ENCODE measurements at regions of chr15 and their contacts with region 1.

Region 1: DNA sequence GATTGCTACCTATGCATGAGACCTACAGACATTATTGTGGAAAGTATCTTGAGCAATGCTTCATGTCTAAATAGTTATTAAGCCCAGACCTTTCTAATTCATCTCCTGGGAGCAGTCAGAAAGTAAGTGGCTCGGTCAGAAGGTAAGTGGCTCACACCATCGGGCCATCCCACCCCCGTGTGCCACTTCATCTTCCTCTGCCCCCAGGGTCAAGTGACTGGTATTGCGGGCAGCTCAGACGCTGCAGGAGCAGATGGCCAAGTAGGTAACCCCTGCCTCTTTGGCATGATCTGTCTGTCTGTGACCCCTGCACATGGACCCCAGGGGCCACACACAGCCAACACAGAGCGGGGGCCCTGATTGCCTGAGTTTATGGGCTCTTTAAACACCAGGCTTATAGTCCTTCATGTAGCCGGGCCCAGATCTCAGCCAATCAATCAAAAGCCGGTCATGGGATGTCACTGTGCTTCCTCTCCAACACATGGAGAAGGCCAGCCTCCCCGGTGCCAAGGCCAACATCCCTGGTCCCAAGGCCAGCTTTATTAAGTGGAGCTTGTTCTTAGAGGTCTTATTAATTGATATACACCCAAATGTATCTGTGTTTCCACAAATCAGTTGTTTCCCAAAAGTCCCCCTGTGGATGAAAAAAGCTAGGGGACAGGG is 42.9 kb downstream of the LARP6 start:
- DNase-seq: no peak
- ATAC-seq: no peak
- H3K4me3 ChIP-seq: no peak overlapping the region
- H3K27ac ChIP-seq: no peak overlapping the region
- H3K4me1 ChIP-seq: peaks cover 42% of the 10 kb centered on the region
- H3K27me3 ChIP-seq: no peaks in the 10 kb centered on the region
- CTCF ChIP-seq: no peak

Region 2: GRCh38 chr15:70690491-70691257 is 120.4 kb before region 1 on chr15:
- CTCF ChIA-PET with region 1: interaction called, 3 read pairs
- POLR2A ChIA-PET with region 1: no interaction called
- intact Hi-C with region 1: loop called (anchors 5 kb)
- DNase-seq: peak; percentile 45
- ATAC-seq: peak; percentile 60
- H3K4me3 ChIP-seq: no peak overlapping the region
- H3K27ac ChIP-seq: no peak overlapping the region
- H3K4me1 ChIP-seq: peaks cover 40% of the 10 kb centered on the region
- H3K27me3 ChIP-seq: no peaks in the 10 kb centered on the region
- CTCF ChIP-seq: no peak

Region 3: GRCh38 chr15:70741107-70741531 is 69.9 kb before region 1 on chr15:
- CTCF ChIA-PET with region 1: no interaction called
- POLR2A ChIA-PET with region 1: no interaction called
- intact Hi-C with region 1: no loop called
- DNase-seq: peak; percentile 65
- ATAC-seq: peak; percentile 78
- H3K4me3 ChIP-seq: no peak overlapping the region
- H3K27ac ChIP-seq: peak overlapping the region; percentile 69
- H3K4me1 ChIP-seq: peaks cover 26% of the 10 kb centered on the region
- H3K27me3 ChIP-seq: no peaks in the 10 kb centered on the region
- CTCF ChIP-seq: no peak

Region 4: DNA sequence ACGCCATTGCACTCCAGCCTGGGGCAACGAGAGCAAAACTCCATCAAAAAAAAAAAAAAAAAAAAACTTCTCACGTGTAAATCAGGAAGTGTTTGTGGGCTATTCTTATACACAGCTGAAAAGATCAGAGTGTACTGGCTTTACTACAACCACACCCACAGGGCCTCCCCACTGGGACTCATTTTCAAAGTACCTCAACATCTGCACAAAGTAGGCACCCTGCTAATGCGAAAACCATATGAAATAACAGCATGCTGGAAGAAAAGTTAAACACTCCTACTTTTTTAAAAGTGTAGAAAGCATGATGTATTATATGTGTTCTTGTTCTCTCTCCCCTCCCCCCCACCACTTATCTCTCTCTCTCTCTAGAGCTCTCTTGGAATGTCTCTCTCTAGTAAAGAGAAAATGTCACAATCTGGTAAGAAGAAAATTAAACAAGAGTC is 58.8 kb before region 1 on chr15:
- CTCF ChIA-PET with region 1: interaction called, 12 read pairs
- POLR2A ChIA-PET with region 1: interaction called, 13 read pairs
- intact Hi-C with region 1: no loop called
- DNase-seq: no peak
- ATAC-seq: no peak
- H3K4me3 ChIP-seq: no peak overlapping the region
- H3K27ac ChIP-seq: no peak overlapping the region
- H3K4me1 ChIP-seq: no peaks in the 10 kb centered on the region
- H3K27me3 ChIP-seq: no peaks in the 10 kb centered on the region
- CTCF ChIP-seq: no peak

Region 5: GRCh38 chr15:70763120-70763878 is 47.7 kb before region 1 on chr15 and contains the start of gene UACA:
- CTCF ChIA-PET with region 1: interaction called, 4 read pairs
- POLR2A ChIA-PET with region 1: no interaction called
- intact Hi-C with region 1: loop called (anchors 2 kb)
- DNase-seq: peak; percentile 98
- ATAC-seq: peak; percentile 88
- H3K4me3 ChIP-seq: peak within 1 kb of the TSS; percentile 97
- H3K27ac ChIP-seq: peak within 1 kb of the TSS; percentile 80
- H3K4me1 ChIP-seq: peaks cover 16% of the 10 kb centered on the region
- H3K27me3 ChIP-seq: no peaks in the 10 kb centered on the region
- CTCF ChIP-seq: no peak
- total RNA-seq, gene UACA: 21.7 and 26.7 TPM in 2 replicates

Region 6: GRCh38 chr15:70775160-70775559 is 35.9 kb before region 1 on chr15:
- CTCF ChIA-PET with region 1: interaction called, 4 read pairs
- POLR2A ChIA-PET with region 1: no interaction called
- intact Hi-C with region 1: loop called (anchors 5 kb)
- DNase-seq: peak; percentile 80
- ATAC-seq: peak; percentile 42
- H3K4me3 ChIP-seq: no peak overlapping the region
- H3K27ac ChIP-seq: peak overlapping the region; percentile 49
- H3K4me1 ChIP-seq: peaks cover 49% of the 10 kb centered on the region
- H3K27me3 ChIP-seq: no peaks in the 10 kb centered on the region
- CTCF ChIP-seq: no peak

Region 7: GRCh38 chr15:70799667-70800450 is 11.2 kb before region 1 on chr15:
- CTCF ChIA-PET with region 1: interaction called, 13 read pairs
- POLR2A ChIA-PET with region 1: no interaction called
- intact Hi-C with region 1: no loop called
- DNase-seq: peak; percentile 68
- ATAC-seq: peak; percentile 37
- H3K4me3 ChIP-seq: no peak overlapping the region
- H3K27ac ChIP-seq: 0 out of 2 replicates have a peak overlapping the region, but pooled peaks have one; percentile 1
- H3K4me1 ChIP-seq: peaks cover 58% of the 10 kb centered on the region
- H3K27me3 ChIP-seq: no peaks in the 10 kb centered on the region
- CTCF ChIP-seq: no peak

Measured in PC-3 (cell line).